ENCODE measurements at regions of chr13 and their contacts with region 1.

Region 1: GRCh38 chr13:34696741-34697140 is 245.3 kb upstream of the NBEA start:
- DNase-seq: no peak
- ATAC-seq: no peak
- H3K4me3 ChIP-seq: no peak overlapping the region
- H3K27ac ChIP-seq: no peak overlapping the region
- H3K4me1 ChIP-seq: no peaks in the 10 kb centered on the region
- H3K27me3 ChIP-seq: no peaks in the 10 kb centered on the region; a peak in 1 of 4 replicates
- CTCF ChIP-seq: no peak
- EP300 ChIP-seq: no peak
- POLR2A ChIP-seq: no peak
- RAD21 ChIP-seq: no peak

Region 2: DNA sequence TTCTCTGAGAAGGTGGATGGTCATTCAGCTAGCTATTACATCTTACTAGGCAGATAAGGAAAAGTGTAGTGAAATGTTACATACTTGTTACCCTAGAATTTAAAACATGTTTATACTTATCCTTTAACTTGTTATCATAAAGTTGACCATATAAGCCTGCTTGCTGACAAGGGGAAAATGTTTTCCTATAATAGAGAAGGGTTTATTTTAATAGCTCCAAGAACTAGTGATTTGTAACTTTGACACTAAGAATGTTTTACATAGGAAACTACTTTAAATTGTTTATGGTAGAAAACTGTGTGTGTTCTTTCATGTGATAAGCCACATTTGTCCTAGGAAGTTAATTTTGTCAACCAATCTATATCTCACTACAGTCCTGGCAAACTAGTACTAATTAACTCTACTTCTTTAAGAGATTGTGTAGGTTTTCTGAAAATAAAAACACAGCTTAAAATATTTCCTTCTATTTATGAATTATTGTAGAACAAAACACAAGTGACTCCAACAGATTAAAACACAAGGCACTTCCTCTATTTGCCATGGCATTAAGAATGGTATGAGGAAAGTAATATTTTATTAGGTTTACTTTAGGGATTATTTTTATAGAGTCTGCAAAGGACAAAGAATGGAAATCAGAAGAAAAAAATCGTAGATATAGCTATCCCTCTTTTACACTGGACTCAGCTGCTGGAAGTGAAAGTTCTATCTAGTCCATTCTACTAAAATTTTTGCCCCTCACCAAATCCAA is 12.0 kb after region 1 on chr13:
- CTCF ChIA-PET with region 1: no interaction called
- POLR2A ChIA-PET with region 1: interaction called, 11 read pairs
- RAD21 ChIA-PET with region 1: no interaction called
- SMC1A ChIA-PET with region 1: no interaction called
- in situ Hi-C with region 1: no loop called
- intact Hi-C with region 1: no loop called
- DNase-seq: no peak
- ATAC-seq: no peak
- H3K4me3 ChIP-seq: no peak overlapping the region
- H3K27ac ChIP-seq: no peak overlapping the region
- H3K4me1 ChIP-seq: no peaks in the 10 kb centered on the region
- H3K27me3 ChIP-seq: no peaks in the 10 kb centered on the region
- CTCF ChIP-seq: no peak
- EP300 ChIP-seq: no peak
- POLR2A ChIP-seq: no peak
- RAD21 ChIP-seq: no peak